Breast epithelium (tissue), 4 donors: ENCODE measurements at regions of chr22 and their contacts with region 1.

Region 1: DNA sequence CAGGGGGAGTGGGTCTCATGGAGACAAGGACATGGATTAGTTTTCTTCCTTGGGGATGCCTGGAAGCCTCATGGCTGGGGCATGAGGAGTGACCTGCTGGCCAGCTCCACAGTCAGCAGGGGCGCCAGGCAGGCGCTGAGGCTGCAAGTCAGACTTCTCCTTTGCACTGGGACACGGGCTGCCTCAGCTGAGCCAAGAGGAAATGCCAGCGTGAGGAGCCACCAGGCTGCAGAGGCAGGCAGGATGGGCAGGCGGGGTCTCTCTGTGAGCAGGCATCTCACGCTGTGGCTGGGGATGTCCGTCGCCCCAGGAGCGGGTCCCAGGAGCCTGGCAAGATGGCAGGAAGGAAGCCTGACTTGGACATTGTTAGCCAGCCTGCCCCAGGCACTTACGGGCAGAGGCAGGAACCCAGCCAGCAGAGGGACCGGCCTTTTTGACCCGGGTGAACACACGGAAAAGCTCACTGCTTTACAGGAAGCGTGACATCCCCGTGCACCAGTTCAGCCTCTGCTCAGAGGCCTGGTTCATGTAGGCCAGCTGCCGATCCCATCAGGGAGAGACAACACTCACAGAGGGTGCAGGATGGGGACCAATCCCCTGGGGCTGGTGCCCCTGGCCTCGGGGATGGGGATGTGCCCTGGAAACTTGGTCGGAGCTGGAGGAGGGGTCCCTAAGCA is 10.2 kb downstream of the GNB1L start:
- DNase-seq: peak in 1 of 2 donors; percentile 74
- H3K4me3 ChIP-seq: peak overlapping the region in 1 of 3 donors; percentile 36
- H3K27ac ChIP-seq: peak overlapping the region; percentile 71 to 93
- H3K4me1 ChIP-seq: peaks cover 27 to 32% of the 10 kb centered on the region in 2 donors
- H3K27me3 ChIP-seq: no peaks in the 10 kb centered on the region
- CTCF ChIP-seq: no peak
- POLR2A ChIP-seq: no peak

Region 2: DNA sequence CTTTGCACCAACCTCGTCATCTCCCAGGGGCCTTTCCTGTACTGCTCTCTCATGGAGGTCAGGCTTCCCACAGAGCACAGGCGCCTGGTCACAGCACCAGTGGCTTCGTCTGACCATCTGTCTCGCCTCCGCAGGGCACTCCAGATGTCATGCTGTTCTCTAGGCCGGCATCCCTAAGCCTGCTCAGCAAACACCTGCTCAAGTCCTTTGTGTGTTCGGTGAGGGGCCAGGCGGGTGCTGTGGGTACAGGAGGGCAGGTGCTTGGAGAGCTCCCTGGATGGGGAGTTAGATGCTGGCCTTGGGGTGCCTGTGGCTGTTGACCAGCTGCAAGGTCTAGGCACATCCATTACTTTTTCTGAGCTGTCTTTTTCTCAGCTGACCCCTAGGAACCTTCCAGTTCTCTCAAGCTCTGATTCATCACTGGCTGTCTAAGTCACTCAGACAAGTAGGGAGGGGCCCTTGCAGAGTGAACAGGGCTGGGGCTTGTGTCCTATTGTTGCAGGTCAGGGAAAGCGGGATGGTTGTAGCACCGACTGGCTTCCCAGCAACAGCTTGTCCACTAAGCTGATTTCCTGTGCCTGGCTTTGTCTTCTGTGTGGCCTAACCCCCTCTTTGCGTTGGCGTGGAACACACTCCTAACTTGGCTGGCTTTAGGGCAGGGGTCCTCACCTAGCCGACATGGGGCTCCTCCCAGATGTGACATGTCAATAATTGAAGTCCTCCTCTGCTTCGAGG is 329.5 kb before region 1 on chr22:
- intact Hi-C with region 1: no loop called
- DNase-seq: no peak
- H3K4me3 ChIP-seq: no peak overlapping the region
- H3K27ac ChIP-seq: no peak overlapping the region
- H3K4me1 ChIP-seq: no peaks in the 10 kb centered on the region
- H3K27me3 ChIP-seq: no peaks in the 10 kb centered on the region
- CTCF ChIP-seq: no peak
- POLR2A ChIP-seq: no peak

Region 3: GRCh38 chr22:19816372-19817119 is 28.0 kb before region 1 on chr22:
- intact Hi-C with region 1: loop called (anchors 1 kb)
- DNase-seq: peak in 1 of 2 donors; percentile 7
- H3K4me3 ChIP-seq: no peak overlapping the region
- H3K27ac ChIP-seq: no peak overlapping the region
- H3K4me1 ChIP-seq: no peaks in the 10 kb centered on the region
- H3K27me3 ChIP-seq: no peaks in the 10 kb centered on the region
- CTCF ChIP-seq: no peak
- POLR2A ChIP-seq: no peak